ENCODE measurements at regions of chr4 and their contacts with region 1.

Region 1: DNA sequence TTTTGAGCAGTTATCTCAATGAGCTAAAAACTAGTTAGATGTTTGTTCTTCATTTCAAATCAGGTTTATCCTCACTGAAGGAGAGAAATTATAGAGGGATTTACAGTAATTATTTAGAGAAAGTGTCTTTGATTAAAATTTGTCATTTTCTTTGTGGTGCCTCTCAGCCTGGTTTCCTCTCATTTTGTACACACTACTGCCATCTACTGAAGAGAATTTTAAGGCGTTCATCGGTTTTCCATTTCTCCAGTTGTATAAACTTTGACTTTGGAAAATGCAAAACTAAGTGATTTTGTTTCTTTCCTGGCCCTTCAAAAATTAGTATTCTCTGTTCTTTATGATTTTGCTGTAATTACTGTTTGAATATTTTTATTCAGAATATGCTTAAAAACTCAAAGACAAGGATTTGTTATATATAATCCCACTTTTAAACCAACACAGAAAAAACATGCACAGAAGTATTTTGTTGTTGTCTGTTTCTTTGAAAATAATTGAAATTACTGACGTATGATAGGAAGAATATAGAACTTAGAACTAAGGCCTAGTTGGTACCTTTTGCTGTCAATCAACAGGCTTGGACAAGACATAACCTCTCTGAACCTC is 34.4 kb upstream of the ANXA3 start:
- DNase-seq: peak; percentile 43
- ATAC-seq: peak; percentile 71
- H3K4me3 ChIP-seq: no peak overlapping the region
- H3K27ac ChIP-seq: no peak overlapping the region
- H3K4me1 ChIP-seq: no peaks in the 10 kb centered on the region
- H3K27me3 ChIP-seq: peaks cover 2% of the 10 kb centered on the region; the same call in 1 of the 2 replicates
- CTCF ChIP-seq: peak; percentile 75
- POLR2A ChIP-seq: no peak
- RAD21 ChIP-seq: peak; percentile 77

Region 2: GRCh38 chr4:77994194-77994721 is 522.9 kb before region 1 on chr4:
- CTCF ChIA-PET with region 1: no interaction called
- POLR2A ChIA-PET with region 1: no interaction called
- dilution Hi-C with region 1: no loop called
- in situ Hi-C with region 1: no loop called
- intact Hi-C with region 1: loop called (anchors 1 kb)
- DNase-seq: peak; percentile 56
- ATAC-seq: peak; percentile 84
- H3K4me3 ChIP-seq: no peak overlapping the region
- H3K27ac ChIP-seq: no peak overlapping the region
- H3K4me1 ChIP-seq: no peaks in the 10 kb centered on the region
- H3K27me3 ChIP-seq: peaks cover 5% of the 10 kb centered on the region
- CTCF ChIP-seq: peak; percentile 60
- POLR2A ChIP-seq: no peak
- RAD21 ChIP-seq: peak; percentile 50

Region 3: GRCh38 chr4:78056265-78057129 is 460.7 kb before region 1 on chr4:
- CTCF ChIA-PET with region 1: no interaction called
- POLR2A ChIA-PET with region 1: no interaction called
- dilution Hi-C with region 1: no loop called
- in situ Hi-C with region 1: no loop called
- intact Hi-C with region 1: loop called (anchors 5 kb)
- DNase-seq: peak; percentile 24
- ATAC-seq: peak; percentile 37
- H3K4me3 ChIP-seq: peak overlapping the region; percentile 57
- H3K27ac ChIP-seq: no peak overlapping the region
- H3K4me1 ChIP-seq: peaks cover 2% of the 10 kb centered on the region; the same call in 1 of the 2 replicates
- H3K27me3 ChIP-seq: peaks cover 46% of the 10 kb centered on the region
- CTCF ChIP-seq: no peak
- POLR2A ChIP-seq: no peak
- RAD21 ChIP-seq: no peak

Measured in IMR-90 (cell line).